ENCODE measurements at regions of chr7 and their contacts with region 1.

Region 1: GRCh38 chr7:27662490-27663205 is at the start of gene HIBADH:
- DNase-seq: peak; percentile 99
- H3K4me3 Mint-ChIP-seq: peak within 1 kb of the TSS; percentile 78
- H3K27ac Mint-ChIP-seq: peak within 1 kb of the TSS; percentile 82
- H3K4me1 Mint-ChIP-seq: no peaks in the 10 kb centered on the region
- H3K27me3 Mint-ChIP-seq: no peaks in the 10 kb centered on the region
- CTCF ChIP-seq: peak; percentile 16
- total RNA-seq, gene HIBADH: 51.5 and 61.1 TPM in 2 replicates

Region 2: GRCh38 chr7:27640914-27641580 is 21.6 kb before region 1 on chr7:
- CTCF ChIA-PET with region 1: interaction called, 5 read pairs
- POLR2A ChIA-PET with region 1: interaction called, 72 read pairs
- intact Hi-C with region 1: no loop called
- DNase-seq: peak; percentile 90
- H3K4me3 Mint-ChIP-seq: peak overlapping the region; percentile 67
- H3K27ac Mint-ChIP-seq: peak overlapping the region; percentile 82
- H3K4me1 Mint-ChIP-seq: peaks cover 51% of the 10 kb centered on the region
- H3K27me3 Mint-ChIP-seq: no peaks in the 10 kb centered on the region
- CTCF ChIP-seq: no peak

Region 3: GRCh38 chr7:27652518-27652917 is 10.1 kb before region 1 on chr7:
- CTCF ChIA-PET with region 1: interaction called, 4 read pairs
- POLR2A ChIA-PET with region 1: interaction called, 69 read pairs
- intact Hi-C with region 1: no loop called
- DNase-seq: no peak
- H3K4me3 Mint-ChIP-seq: no peak overlapping the region
- H3K27ac Mint-ChIP-seq: no peak overlapping the region
- H3K4me1 Mint-ChIP-seq: peaks cover 26% of the 10 kb centered on the region
- H3K27me3 Mint-ChIP-seq: no peaks in the 10 kb centered on the region
- CTCF ChIP-seq: no peak

Region 4: DNA sequence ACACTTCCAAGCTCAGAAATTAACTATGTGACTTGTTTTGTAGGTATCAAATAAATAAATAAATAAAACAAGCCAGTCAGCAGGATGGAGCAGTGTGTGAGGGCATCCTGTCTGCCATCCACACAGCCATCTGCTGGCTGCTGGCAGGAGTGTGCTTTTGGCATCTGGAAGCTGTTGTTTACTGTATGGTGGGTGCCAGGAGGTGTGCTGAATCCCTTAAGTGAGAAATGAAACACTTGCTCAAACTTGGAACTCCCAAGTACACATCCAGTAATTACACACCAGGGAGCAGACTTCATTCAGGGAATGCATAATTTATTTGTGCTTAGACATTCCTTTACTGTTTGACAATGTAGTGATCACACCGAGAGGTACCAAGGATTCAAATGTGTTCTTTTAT is 60.4 kb after region 1 on chr7:
- CTCF ChIA-PET with region 1: no interaction called
- POLR2A ChIA-PET with region 1: interaction called, 12 read pairs
- intact Hi-C with region 1: no loop called
- DNase-seq: peak; percentile 33
- H3K4me3 Mint-ChIP-seq: no peak overlapping the region
- H3K27ac Mint-ChIP-seq: no peak overlapping the region
- H3K4me1 Mint-ChIP-seq: no peaks in the 10 kb centered on the region
- H3K27me3 Mint-ChIP-seq: no peaks in the 10 kb centered on the region
- CTCF ChIP-seq: peak; percentile 19

Region 5: GRCh38 chr7:27774717-27775328 is 112.2 kb after region 1 on chr7:
- CTCF ChIA-PET with region 1: interaction called, 5 read pairs
- POLR2A ChIA-PET with region 1: interaction called, 11 read pairs
- intact Hi-C with region 1: no loop called
- DNase-seq: peak; percentile 48
- H3K4me3 Mint-ChIP-seq: no peak overlapping the region
- H3K27ac Mint-ChIP-seq: no peak overlapping the region
- H3K4me1 Mint-ChIP-seq: peaks cover 10% of the 10 kb centered on the region
- H3K27me3 Mint-ChIP-seq: no peaks in the 10 kb centered on the region
- CTCF ChIP-seq: peak; percentile 71

Measured in MCF 10A (cell line).